Activated CD4-positive, alpha-beta T cell treated with anti-CD3 and anti-CD28 coated beads for 36 hours (primary cell): ENCODE measurements at regions of chr6 and their contacts with region 1.

Region 1: DNA sequence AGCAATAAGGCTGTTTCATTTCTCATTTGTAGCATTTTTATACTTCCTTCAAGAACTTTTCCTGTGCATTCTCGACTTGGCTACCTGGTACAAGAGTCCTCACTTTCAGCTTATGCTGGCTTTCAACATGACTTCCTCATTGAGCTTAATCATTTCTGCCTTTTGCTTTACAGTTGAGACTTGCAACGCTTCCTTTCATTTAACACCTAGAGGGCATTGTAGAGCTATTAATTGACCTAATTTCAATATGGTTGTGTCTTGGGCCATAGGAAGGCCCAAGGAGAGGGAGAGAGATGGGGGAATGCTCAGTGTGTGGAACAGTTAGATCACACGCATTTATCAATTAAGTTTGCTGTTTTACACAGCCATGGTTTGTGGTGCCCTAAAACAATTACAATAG is 37.2 kb downstream of the SLC22A2 start:
- DNase-seq: no peak
- ATAC-seq: peak; percentile 30
- H3K4me3 Mint-ChIP-seq: no peak overlapping the region
- H3K27ac Mint-ChIP-seq: no peak overlapping the region
- H3K4me1 Mint-ChIP-seq: peaks cover 10% of the 10 kb centered on the region
- H3K27me3 Mint-ChIP-seq: peaks cover 31% of the 10 kb centered on the region

Region 2: GRCh38 chr6:159989492-159990480 is 231.6 kb before region 1 on chr6:
- CTCF ChIA-PET with region 1: no interaction called
- POLR2A ChIA-PET with region 1: no interaction called
- intact Hi-C with region 1: no loop called
- DNase-seq: no peak
- ATAC-seq: peak; percentile 90
- H3K4me3 Mint-ChIP-seq: no peak overlapping the region
- H3K27ac Mint-ChIP-seq: peak overlapping the region; percentile 70
- H3K4me1 Mint-ChIP-seq: peaks cover 65% of the 10 kb centered on the region
- H3K27me3 Mint-ChIP-seq: no peaks in the 10 kb centered on the region

Region 3: GRCh38 chr6:160137989-160138835 is 83.2 kb before region 1 on chr6:
- CTCF ChIA-PET with region 1: no interaction called
- POLR2A ChIA-PET with region 1: no interaction called
- intact Hi-C with region 1: loop called in 1 of 2 experiments (anchors 1 kb)
- DNase-seq: peak; percentile 86
- ATAC-seq: peak; percentile 69
- H3K4me3 Mint-ChIP-seq: no peak overlapping the region
- H3K27ac Mint-ChIP-seq: peak overlapping the region; percentile 26
- H3K4me1 Mint-ChIP-seq: peaks cover 15% of the 10 kb centered on the region
- H3K27me3 Mint-ChIP-seq: no peaks in the 10 kb centered on the region

Region 4: DNA sequence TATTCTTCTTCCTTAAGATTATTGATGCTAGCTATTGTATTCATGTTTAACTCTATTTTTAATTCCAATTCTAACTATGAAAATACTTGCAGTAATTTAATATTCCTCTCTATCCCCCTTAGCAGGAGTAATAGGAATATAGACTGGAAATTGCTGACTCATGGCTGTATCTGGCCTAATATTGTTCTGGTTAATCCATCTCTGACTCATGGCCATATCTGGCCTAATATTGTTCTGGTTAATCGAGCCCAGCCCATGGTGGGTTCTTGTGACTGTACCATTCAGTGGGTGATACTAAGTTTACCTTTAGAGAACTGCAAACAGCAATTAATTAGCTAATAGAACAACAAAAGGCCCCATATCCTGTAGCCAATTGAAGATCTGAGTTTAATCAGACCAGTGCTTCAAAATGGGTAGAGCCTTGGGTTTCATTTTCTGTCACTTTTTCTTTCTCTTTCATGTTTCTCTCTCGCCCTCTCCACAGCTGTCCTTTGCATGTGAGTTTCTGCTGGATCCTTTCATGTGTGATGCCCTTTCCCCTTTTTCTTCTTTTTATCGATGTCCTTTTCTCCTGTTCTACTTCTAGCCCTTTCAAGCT is 177.3 kb after region 1 on chr6:
- CTCF ChIA-PET with region 1: no interaction called
- POLR2A ChIA-PET with region 1: no interaction called
- intact Hi-C with region 1: no loop called
- DNase-seq: no peak
- ATAC-seq: no peak
- H3K4me3 Mint-ChIP-seq: no peak overlapping the region
- H3K27ac Mint-ChIP-seq: no peak overlapping the region
- H3K4me1 Mint-ChIP-seq: peaks cover 7% of the 10 kb centered on the region
- H3K27me3 Mint-ChIP-seq: peaks cover 15% of the 10 kb centered on the region

Region 5: GRCh38 chr6:160462551-160463109 is 241.2 kb after region 1 on chr6:
- CTCF ChIA-PET with region 1: no interaction called
- POLR2A ChIA-PET with region 1: no interaction called
- intact Hi-C with region 1: loop called (anchors 1 to 5 kb)
- DNase-seq: peak; percentile 63
- ATAC-seq: peak; percentile 80
- H3K4me3 Mint-ChIP-seq: peak overlapping the region; percentile 17
- H3K27ac Mint-ChIP-seq: peak overlapping the region; percentile 65
- H3K4me1 Mint-ChIP-seq: peaks cover 60% of the 10 kb centered on the region
- H3K27me3 Mint-ChIP-seq: peaks cover 34% of the 10 kb centered on the region

Region 6: GRCh38 chr6:161393839-161394364 is 1172.5 kb after region 1 on chr6:
- CTCF ChIA-PET with region 1: no interaction called
- POLR2A ChIA-PET with region 1: no interaction called
- intact Hi-C with region 1: no loop called
- DNase-seq: peak; percentile 75
- ATAC-seq: peak; percentile 99
- H3K4me3 Mint-ChIP-seq: no peak overlapping the region
- H3K27ac Mint-ChIP-seq: no peak overlapping the region
- H3K4me1 Mint-ChIP-seq: no peaks in the 10 kb centered on the region
- H3K27me3 Mint-ChIP-seq: peaks cover 5% of the 10 kb centered on the region